MCF 10A (cell line): ENCODE measurements at regions of chr2 and their contacts with region 1.

Region 1: GRCh38 chr2:174465327-174465726 is 21.5 kb downstream of the GPR155 start:
- DNase-seq: no peak
- H3K4me3 Mint-ChIP-seq: no peak overlapping the region
- H3K27ac Mint-ChIP-seq: no peak overlapping the region
- H3K4me1 Mint-ChIP-seq: no peaks in the 10 kb centered on the region
- H3K27me3 Mint-ChIP-seq: no peaks in the 10 kb centered on the region
- CTCF ChIP-seq: no peak

Region 2: DNA sequence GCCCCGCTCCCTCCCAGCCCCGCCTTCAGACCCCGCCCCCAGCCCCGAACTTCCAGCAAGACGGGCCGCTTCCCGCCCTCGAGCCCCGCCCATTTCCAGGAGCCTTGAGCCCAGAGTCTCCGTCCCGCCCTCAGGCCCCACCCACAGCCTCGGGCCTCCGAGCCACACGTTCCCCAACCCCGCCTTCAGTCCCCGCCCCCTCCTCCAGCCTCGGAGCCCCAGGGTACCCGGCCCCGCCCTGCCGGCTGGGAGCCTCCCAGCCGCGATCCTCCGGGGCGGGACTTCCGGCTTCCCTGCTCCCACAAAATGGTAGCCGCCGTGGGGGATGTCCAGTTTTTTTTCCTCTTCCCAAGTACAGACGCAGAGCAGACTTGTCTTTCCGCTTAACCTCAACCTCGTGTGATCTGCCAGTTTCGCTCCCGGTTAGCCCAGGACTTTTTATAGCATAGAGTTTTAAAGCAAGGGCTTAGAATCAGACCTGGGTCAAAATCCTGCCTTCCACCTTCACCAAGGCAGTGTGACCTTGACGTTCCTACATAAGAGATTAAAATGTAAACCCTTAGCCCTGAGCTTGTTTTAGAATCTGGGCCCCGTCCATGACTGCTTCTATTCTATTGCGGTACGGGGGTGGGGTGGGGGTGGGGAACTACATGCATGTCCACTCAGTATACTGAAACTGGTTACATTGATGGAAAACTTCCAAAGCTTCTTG is 21.9 kb after region 1 on chr2:
- CTCF ChIA-PET with region 1: interaction called, 26 read pairs
- POLR2A ChIA-PET with region 1: interaction called, 3 read pairs
- intact Hi-C with region 1: no loop called
- DNase-seq: peak; percentile 98
- H3K4me3 Mint-ChIP-seq: peak overlapping the region; percentile 82
- H3K27ac Mint-ChIP-seq: peak overlapping the region; percentile 97
- H3K4me1 Mint-ChIP-seq: peaks cover 8% of the 10 kb centered on the region
- H3K27me3 Mint-ChIP-seq: no peaks in the 10 kb centered on the region
- CTCF ChIP-seq: no peak

Region 3: DNA sequence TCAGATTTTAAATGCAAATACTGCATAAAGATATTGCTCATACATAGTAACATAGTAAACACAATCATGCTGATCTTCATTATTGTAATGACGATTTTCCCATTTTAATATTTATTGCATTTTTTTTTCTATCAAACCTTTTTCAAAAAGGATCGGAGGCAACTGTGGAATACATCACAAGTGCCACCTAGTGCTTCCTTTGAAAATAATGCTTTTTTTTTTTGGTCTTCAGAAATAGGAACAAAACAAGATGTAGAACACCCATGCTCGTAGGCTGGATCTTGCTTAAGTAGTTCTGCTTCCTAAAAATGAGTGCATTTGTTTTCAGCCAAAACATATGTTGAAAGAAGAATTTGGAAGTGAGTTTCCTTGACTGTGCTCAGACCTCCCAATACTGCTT is 57.2 kb after region 1 on chr2:
- CTCF ChIA-PET with region 1: interaction called, 24 read pairs
- POLR2A ChIA-PET with region 1: interaction called, 5 read pairs
- intact Hi-C with region 1: loop called (anchors 1 kb)
- DNase-seq: no peak
- H3K4me3 Mint-ChIP-seq: no peak overlapping the region
- H3K27ac Mint-ChIP-seq: no peak overlapping the region
- H3K4me1 Mint-ChIP-seq: no peaks in the 10 kb centered on the region
- H3K27me3 Mint-ChIP-seq: peaks cover 26% of the 10 kb centered on the region
- CTCF ChIP-seq: peak; percentile 10

Region 4: GRCh38 chr2:174546581-174547506 is 81.5 kb after region 1 on chr2:
- CTCF ChIA-PET with region 1: interaction called, 5 read pairs
- POLR2A ChIA-PET with region 1: no interaction called
- intact Hi-C with region 1: loop called (anchors 1 kb)
- DNase-seq: peak; percentile 40
- H3K4me3 Mint-ChIP-seq: no peak overlapping the region
- H3K27ac Mint-ChIP-seq: no peak overlapping the region
- H3K4me1 Mint-ChIP-seq: no peaks in the 10 kb centered on the region
- H3K27me3 Mint-ChIP-seq: no peaks in the 10 kb centered on the region
- CTCF ChIP-seq: no peak

Region 5: GRCh38 chr2:174603280-174603679 is 138.0 kb after region 1 on chr2:
- CTCF ChIA-PET with region 1: interaction called, 35 read pairs
- POLR2A ChIA-PET with region 1: interaction called, 10 read pairs
- intact Hi-C with region 1: no loop called
- DNase-seq: peak; percentile 58
- H3K4me3 Mint-ChIP-seq: no peak overlapping the region
- H3K27ac Mint-ChIP-seq: no peak overlapping the region
- H3K4me1 Mint-ChIP-seq: peaks cover 25% of the 10 kb centered on the region
- H3K27me3 Mint-ChIP-seq: no peaks in the 10 kb centered on the region
- CTCF ChIP-seq: peak; percentile 18

Region 6: DNA sequence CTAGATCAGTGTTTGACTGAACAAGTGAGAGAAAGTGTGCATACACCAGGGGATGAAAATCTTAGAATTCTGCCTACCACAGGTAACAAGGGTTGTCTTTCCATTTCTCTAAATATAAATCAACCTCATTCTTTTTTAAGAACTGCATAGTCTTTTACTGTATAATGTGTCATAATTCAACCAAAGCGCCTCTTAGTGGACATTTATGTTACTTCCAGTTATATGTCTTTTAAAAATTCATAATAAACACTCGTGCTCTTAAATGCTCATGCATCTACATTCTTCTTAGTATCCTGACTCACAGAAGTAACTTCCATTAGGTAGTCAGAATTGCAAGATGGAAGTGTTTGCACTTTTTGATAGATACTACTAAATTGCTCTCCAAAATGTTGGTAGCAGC is 222.8 kb after region 1 on chr2:
- CTCF ChIA-PET with region 1: interaction called, 104 read pairs
- POLR2A ChIA-PET with region 1: interaction called, 15 read pairs
- intact Hi-C with region 1: loop called (anchors 2 kb)
- DNase-seq: peak; percentile 51
- H3K4me3 Mint-ChIP-seq: no peak overlapping the region
- H3K27ac Mint-ChIP-seq: no peak overlapping the region
- H3K4me1 Mint-ChIP-seq: peaks cover 5% of the 10 kb centered on the region
- H3K27me3 Mint-ChIP-seq: peaks cover 16% of the 10 kb centered on the region
- CTCF ChIP-seq: peak; percentile 27